Activated B cell treated with CpG ODN at 0.5 μM for 24 hours (primary cell): ENCODE measurements at regions of chr3 and their contacts with region 1.

Region 1: DNA sequence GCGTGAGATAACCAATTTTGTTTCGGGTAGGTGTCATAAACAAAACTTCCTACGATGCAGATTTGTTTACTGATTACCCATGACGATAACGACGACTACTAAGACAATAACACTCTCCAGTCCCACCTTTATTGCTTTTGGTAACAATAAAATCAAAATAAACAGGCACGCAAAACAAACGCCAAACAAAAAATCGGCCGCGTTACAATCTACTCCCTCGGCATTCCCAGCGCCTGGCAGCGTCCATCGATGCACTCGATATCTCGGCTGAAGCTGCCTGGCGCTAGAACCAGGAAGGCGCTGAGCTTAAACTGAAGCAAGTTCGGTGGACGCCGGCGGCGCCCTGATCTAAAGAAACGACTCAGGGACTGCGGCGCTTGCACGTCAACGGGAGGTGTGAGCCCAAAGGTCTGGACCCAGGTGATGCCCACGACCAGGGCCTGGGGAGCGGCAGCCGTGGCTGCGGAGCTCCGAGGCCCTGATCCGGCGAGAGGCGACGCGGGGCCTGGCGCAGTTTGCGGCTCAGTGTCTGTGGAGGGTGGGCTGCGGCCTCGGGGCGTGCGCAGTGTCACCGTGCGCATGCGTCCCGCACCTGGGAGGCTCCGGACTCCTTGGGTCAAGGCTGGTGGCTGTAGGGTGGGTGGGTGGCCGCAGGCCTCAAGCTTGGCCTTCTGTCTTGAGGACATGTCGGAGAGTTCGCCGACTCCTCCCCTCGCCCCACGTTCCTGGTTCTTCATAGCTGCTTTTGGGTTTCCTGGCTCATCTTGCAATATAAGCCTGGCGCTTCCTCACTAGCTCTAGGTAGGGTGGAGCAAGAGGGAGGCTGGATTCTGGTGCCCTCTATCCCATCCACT is at the start of gene RSRC1:
- DNase-seq: peak; percentile 72
- ATAC-seq: peak; percentile 89
- H3K4me3 Mint-ChIP-seq: peak within 1 kb of the TSS; percentile 90
- H3K27ac Mint-ChIP-seq: peak within 1 kb of the TSS; percentile 83
- H3K4me1 Mint-ChIP-seq: peaks cover 48% of the 10 kb centered on the region
- H3K27me3 Mint-ChIP-seq: peaks cover 31% of the 10 kb centered on the region
- CTCF ChIP-seq: no peak
- total RNA-seq, gene RSRC1: 39.9 and 44.8 TPM in 2 replicates

Region 2: DNA sequence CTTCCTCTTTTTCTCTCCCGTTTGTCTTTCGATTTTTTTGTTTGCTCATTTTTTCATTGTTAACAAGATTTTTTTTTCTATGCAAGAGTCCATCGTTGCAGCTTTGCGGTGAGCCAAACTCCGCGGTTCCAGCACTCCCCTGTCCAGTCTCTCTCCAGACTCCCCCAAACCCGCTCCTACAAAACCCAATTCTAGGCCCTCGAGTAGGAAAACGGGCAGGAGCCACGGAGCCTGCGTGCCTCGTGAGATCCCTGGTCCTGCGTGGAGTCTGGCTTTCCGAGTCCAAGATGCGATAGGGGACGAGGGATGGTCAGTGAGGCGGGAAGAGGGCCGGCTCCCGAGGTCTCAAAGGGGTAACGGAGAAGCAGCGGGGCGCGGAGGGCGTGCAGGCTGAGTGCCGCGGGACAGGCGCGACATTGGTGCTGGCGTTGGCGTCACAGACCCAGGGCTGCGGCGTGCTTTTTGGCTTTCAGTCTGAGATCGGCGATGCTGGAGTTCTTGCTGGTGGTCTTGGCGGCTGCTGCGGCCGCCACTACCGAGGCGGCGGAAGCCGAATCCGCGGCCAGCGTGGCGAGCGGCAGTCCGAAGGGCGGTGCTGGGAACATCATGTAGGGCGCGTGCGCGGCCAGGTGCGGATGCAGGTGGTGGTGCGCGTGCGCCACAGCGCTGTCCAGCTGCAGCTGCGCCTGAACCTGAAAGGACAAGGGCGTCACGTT is 12.3 kb before region 1 on chr3:
- CTCF ChIA-PET with region 1: interaction called, 4 read pairs
- POLR2A ChIA-PET with region 1: interaction called, 10 read pairs
- intact Hi-C with region 1: loop called (anchors 1 kb)
- DNase-seq: peak; percentile 79
- ATAC-seq: peak; percentile 93
- H3K4me3 Mint-ChIP-seq: peak overlapping the region; percentile 98
- H3K27ac Mint-ChIP-seq: peak overlapping the region; percentile 74
- H3K4me1 Mint-ChIP-seq: peaks cover 22% of the 10 kb centered on the region
- H3K27me3 Mint-ChIP-seq: peaks cover 57% of the 10 kb centered on the region
- CTCF ChIP-seq: no peak

Region 3: GRCh38 chr3:158347966-158348365 is 237.9 kb after region 1 on chr3:
- CTCF ChIA-PET with region 1: no interaction called
- POLR2A ChIA-PET with region 1: no interaction called
- intact Hi-C with region 1: no loop called
- DNase-seq: no peak
- ATAC-seq: no peak
- H3K4me3 Mint-ChIP-seq: no peak overlapping the region
- H3K27ac Mint-ChIP-seq: peak overlapping the region; percentile 46
- H3K4me1 Mint-ChIP-seq: peaks cover 10% of the 10 kb centered on the region
- H3K27me3 Mint-ChIP-seq: no peaks in the 10 kb centered on the region
- CTCF ChIP-seq: no peak